K562 (cell line): ENCODE measurements at regions of chr2 and their contacts with region 1.

Region 1: GRCh38 chr2:120174963-120175581 is 48.1 kb downstream of the TMEM185B start:
- DNase-seq: peak; percentile 55 to 70 (median 67)
- ATAC-seq: peak; percentile 60
- H3K4me3 ChIP-seq: no peak overlapping the region
- H3K27ac ChIP-seq: no peak overlapping the region
- H3K4me1 ChIP-seq: peaks cover 0 to 5% of the 10 kb centered on the region in 2 experiments; a peak in 3 of 5 replicates
- H3K27me3 ChIP-seq: no peaks in the 10 kb centered on the region
- CTCF ChIP-seq: peak; percentile 59 to 80 (median 64); a peak in 5 of 6 replicates
- EP300 ChIP-seq: no peak
- POLR2A ChIP-seq: no peak
- RAD21 ChIP-seq: peak; percentile 79 to 85

Region 2: DNA sequence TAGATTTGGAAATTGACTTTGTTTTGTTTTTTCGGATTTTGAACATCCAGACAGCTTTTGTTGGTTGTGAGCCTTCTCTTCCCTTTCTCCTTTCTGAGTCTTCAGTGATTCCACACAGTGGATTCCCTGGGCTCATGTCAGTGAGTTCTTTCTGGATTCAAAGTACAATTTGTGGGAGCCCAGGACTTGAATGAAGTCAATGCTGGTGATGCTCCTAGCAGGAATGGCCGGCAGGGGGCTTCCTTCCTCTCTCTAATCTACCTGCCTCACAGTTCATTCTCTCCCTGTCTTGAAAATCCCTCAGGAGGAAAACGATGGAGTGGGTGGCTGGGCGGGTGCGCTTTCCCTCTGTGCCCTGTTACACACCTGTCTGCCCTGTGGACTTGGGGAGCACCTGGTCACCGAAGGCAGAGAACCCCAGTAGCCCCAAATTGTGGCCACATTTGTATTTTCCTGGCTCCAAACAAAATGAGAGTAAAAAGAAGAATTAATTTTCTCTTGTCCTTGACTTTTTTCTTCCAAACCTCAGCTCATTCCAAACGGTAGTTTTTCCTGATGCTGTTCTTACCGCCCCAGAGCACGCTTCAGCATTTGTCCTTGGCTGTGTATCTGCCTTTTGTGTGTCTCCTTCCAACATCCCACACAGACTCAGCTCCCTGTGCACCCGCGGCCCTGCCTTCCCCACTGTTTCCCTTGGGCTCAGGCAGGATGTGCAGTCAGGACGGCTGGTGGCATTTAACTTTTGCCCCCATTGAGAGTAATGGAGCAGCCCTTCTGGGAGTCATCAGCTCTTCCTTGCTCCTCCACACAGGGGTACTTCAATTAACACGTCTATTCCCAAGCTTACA is 1146.5 kb before region 1 on chr2:
- CTCF ChIA-PET with region 1: no interaction called
- POLR2A ChIA-PET with region 1: no interaction called
- in situ Hi-C with region 1: no loop called
- intact Hi-C with region 1: no loop called
- DNase-seq: peak; percentile 48 to 58 (median 55)
- ATAC-seq: peak; percentile 84
- H3K4me3 ChIP-seq: no peak overlapping the region
- H3K27ac ChIP-seq: no peak overlapping the region
- H3K4me1 ChIP-seq: no peaks in the 10 kb centered on the region
- H3K27me3 ChIP-seq: peaks cover 0 to 28% of the 10 kb centered on the region in 2 experiments; a peak in 3 of 5 replicates
- CTCF ChIP-seq: peak; percentile 66 to 73 (median 67)
- EP300 ChIP-seq: no peak
- POLR2A ChIP-seq: no peak
- RAD21 ChIP-seq: peak; percentile 40 to 68

Region 3: DNA sequence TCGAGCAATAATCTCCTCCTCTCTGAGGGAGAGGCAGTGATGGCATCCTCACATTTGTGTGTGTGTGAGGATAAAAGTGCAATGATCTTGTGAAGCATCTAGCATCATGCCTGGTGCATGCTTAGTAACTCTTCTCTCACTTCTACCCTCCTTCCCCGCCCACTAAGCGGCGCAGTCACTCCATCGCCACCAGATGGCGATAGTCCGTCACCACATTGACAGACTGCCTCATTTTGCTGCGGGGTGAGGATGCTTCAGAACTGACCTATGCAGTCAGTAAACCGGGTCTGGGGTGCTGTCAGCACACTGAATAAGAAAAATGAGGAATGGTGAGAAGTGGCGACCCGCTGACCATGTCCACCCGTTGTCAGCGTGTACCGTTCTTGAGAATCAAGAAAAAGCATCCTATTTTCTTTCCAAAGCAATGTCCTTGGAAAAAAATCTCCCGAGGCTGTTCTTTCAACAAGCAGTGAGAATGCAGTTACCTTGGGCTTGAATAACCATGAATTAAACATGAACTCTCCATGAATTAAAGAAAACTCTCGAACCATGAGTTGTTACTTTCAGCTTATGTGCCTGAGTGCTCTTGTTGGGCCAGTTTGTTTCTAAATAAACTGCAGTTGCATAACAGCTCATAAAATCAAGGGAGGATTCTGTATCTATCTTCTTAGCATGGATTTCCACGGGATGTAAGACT is 533.4 kb before region 1 on chr2:
- CTCF ChIA-PET with region 1: interaction called, 7 read pairs
- POLR2A ChIA-PET with region 1: interaction called, 3 read pairs
- in situ Hi-C with region 1: no loop called
- intact Hi-C with region 1: loop called (anchors 1 kb)
- DNase-seq: peak; percentile 75 to 83 (median 76)
- ATAC-seq: peak; percentile 99
- H3K4me3 ChIP-seq: no peak overlapping the region
- H3K27ac ChIP-seq: no peak overlapping the region
- H3K4me1 ChIP-seq: peaks cover 0 to 3% of the 10 kb centered on the region in 2 experiments; a peak in 2 of 5 replicates
- H3K27me3 ChIP-seq: peaks cover 26 to 37% of the 10 kb centered on the region in 2 experiments; a peak in 4 of 5 replicates
- CTCF ChIP-seq: peak; percentile 95
- EP300 ChIP-seq: no peak
- POLR2A ChIP-seq: no peak
- RAD21 ChIP-seq: peak; percentile 69 to 83

Region 4: DNA sequence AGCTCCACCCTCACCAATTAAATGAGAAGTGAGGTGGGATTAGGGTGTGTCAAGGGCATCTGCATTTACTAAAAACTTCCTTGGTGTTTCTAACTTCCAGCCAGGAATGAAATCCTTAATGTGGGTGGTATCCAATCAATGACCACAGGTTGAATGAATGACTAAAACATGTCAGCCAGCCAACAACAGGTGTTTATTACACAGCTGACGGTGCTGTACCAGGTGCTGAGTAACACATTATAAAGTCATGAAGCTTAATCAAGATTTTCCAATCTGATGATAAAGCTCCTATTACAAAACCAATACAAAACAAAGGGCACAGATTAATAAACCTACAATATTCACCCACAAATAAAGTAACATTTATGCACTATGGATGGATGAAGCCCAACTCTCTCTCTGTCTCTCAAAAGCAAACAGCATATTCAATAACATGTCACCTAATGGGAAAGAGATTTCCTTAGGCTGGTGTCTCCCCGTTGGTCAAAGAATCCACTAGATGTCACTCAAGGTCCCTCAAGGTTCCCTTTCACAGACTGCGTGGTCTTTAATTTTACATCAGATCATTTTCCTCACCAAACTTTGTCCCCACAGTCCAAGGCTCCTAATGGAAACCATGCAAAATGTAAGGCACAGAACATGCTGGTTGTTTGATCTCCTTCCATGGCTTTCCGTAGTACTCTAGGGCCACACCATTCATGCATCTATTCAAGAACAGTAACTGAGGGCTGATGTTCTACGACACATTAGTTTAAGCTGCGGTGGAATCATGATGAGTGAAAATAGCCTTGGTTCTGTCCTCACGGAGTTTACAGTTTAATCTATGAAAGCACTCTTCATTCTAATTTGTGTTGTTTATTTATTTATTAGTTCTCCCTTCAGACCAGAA is 421.8 kb before region 1 on chr2:
- CTCF ChIA-PET with region 1: interaction called, 9 read pairs
- POLR2A ChIA-PET with region 1: no interaction called
- in situ Hi-C with region 1: loop called (anchors 5 kb)
- intact Hi-C with region 1: loop called (anchors 1 kb)
- DNase-seq: peak in 2 of 4 experiments; percentile 56 to 69
- ATAC-seq: peak; percentile 90
- H3K4me3 ChIP-seq: no peak overlapping the region
- H3K27ac ChIP-seq: no peak overlapping the region
- H3K4me1 ChIP-seq: peaks cover 0 to 6% of the 10 kb centered on the region in 2 experiments; a peak in 3 of 5 replicates
- H3K27me3 ChIP-seq: 0 out of 5 replicates have a peak, but pooled peaks cover 4 to 5% of the 10 kb centered on the region in 2 experiments
- CTCF ChIP-seq: peak; percentile 72 to 91 (median 80)
- EP300 ChIP-seq: no peak
- POLR2A ChIP-seq: no peak
- RAD21 ChIP-seq: peak; percentile 87 to 93

Region 5: DNA sequence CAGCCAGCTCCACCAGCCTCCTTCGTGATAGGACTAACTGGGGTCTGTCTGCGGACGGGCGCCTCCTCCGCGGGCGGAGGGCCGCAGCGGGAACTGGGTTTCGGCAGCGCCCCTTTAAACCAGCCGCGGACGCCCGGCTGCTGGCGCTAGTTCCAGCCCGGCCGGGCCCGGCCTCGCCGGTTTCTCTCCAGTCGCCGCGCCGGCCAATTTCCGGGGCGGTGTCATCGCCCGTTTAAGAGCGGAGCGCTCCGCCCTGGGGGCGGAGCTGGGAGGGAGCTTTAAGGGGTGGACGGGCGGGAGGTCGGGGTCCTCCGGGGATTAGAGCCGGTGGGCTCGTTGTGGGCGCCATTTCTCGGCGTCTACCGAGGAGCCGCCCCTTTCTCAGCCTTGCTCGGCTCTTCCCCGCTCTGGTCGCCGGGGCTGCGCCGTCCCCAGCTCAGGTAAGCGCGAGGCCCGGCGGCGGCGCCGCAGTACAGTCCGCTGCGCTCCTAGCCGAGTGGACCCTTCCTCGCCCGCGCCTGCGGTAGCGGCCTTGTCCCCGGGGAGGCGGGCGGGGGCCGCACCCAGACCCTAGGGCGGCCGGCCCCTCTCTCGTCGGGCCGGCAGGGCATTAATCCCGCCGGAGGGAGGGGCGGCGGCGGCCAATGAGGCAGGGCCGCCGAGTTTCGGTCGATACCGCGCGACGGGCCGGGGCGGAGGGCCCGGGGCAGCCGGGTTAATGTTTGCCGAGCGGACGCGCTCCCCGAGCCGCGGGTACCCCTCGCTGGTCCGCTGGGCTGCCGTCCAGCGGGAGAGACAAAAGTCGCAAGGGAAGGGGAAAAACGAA is 162.1 kb before region 1 on chr2 and contains the start of gene EPB41L5:
- CTCF ChIA-PET with region 1: no interaction called
- POLR2A ChIA-PET with region 1: no interaction called
- in situ Hi-C with region 1: no loop called
- intact Hi-C with region 1: loop called (anchors 10 kb)
- DNase-seq: peak; percentile 82 to 95 (median 88)
- ATAC-seq: peak; percentile 92
- H3K4me3 ChIP-seq: peak within 1 kb of the TSS; percentile 84
- H3K27ac ChIP-seq: peak within 1 kb of the TSS; percentile 71
- H3K4me1 ChIP-seq: peaks cover 2 to 15% of the 10 kb centered on the region in 2 experiments; a peak in 3 of 5 replicates
- H3K27me3 ChIP-seq: no peaks in the 10 kb centered on the region
- CTCF ChIP-seq: no peak
- EP300 ChIP-seq: no peak
- POLR2A ChIP-seq: peak; percentile 65
- RAD21 ChIP-seq: no peak
- polyA plus RNA-seq, gene EPB41L5: 2.3 to 3.0 TPM

Region 6: GRCh38 chr2:120312861-120313694 is 138.0 kb after region 1 on chr2:
- CTCF ChIA-PET with region 1: no interaction called
- POLR2A ChIA-PET with region 1: no interaction called
- in situ Hi-C with region 1: no loop called
- intact Hi-C with region 1: loop called (anchors 5 kb)
- DNase-seq: peak; percentile 72 to 85 (median 76)
- ATAC-seq: peak; percentile 92
- H3K4me3 ChIP-seq: no peak overlapping the region
- H3K27ac ChIP-seq: no peak overlapping the region
- H3K4me1 ChIP-seq: peaks cover 0 to 6% of the 10 kb centered on the region in 2 experiments; a peak in 2 of 5 replicates
- H3K27me3 ChIP-seq: peaks cover 29 to 62% of the 10 kb centered on the region in 2 experiments
- CTCF ChIP-seq: peak; percentile 92 to 98 (median 97)
- EP300 ChIP-seq: no peak
- POLR2A ChIP-seq: no peak
- RAD21 ChIP-seq: peak; percentile 95 to 96